Lower leg skin (tissue), 4 donors: ENCODE measurements at regions of chr3 and their contacts with region 1.

Region 1: GRCh38 chr3:79081335-79081734 is 686.5 kb downstream of the ROBO1 start:
- DNase-seq: no peak
- H3K4me3 ChIP-seq: no peak overlapping the region
- CTCF ChIP-seq: no peak
- POLR2A ChIP-seq: no peak

Region 2: DNA sequence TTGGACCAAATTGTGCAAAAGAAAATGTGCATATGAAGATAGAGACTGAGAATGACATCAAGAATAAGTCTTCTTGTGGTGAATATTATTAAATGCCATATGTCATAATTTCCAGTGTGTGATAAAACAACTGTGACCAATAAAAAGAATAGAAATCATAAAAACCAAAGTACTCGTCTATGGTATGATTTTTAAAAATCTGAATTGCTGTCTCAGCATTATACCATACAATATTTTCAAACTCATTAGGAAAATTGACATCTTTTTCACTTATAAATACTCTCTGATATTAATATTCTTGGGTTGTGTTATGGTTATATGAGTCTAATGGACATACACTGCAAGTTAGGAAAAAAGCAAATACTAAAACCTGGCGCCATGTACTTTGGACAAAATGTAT is 407.1 kb after region 1 on chr3:
- intact Hi-C with region 1: loop called (anchors 5 kb)
- DNase-seq: no peak
- H3K4me3 ChIP-seq: no peak overlapping the region
- CTCF ChIP-seq: no peak
- POLR2A ChIP-seq: no peak